Sciatic nerve (tissue), 2 donors: ENCODE measurements at regions of chr19 and their contacts with region 1.

Region 1: GRCh38 chr19:30649934-30650614 is 277.9 kb downstream of the ZNF536 start:
- DNase-seq: peak; percentile 66
- ATAC-seq: peak; percentile 42

Region 2: DNA sequence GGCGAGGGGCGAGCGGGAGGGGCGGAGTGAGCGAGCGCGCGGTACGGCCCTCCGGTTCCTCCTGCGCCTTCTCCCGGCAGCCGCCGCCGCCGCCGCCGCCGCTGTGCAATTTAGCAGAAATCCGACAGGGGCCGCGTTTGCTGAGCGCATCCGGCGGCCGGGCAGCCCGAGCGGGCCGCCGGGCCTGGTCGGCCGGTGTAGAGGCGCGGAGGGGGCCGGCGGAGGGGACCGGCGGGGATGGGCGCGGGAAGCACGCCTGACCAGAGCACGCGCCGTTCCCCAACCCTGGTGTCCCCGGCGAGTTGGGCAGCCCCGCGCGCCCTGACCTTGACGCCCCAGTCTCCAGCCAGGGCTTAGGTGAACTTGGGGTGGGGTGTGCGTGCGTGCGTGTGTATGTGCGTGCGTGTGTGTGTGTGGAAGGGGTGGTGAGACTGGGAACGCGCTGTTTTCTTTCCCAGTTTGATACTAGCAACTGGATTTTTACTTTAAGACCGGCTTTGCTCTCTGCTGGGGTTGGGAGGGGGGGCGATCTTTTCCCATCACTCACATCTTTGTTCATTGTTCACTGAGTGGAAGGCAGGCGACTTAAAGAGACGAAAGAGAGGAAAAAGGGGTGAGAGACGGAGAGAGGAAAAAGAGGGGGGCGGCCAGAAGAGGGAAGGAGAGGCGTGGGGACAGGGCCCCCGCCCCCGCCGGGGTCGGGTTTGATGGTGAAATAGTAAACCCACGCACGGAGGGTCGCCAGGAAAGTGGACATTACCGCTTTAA is 422.2 kb before region 1 on chr19:
- intact Hi-C with region 1: loop called (anchors 10 kb)
- DNase-seq: peak; percentile 82
- ATAC-seq: peak; percentile 76